Left colon (tissue), 2 donors: ENCODE measurements at regions of chr2 and their contacts with region 1.

Region 1: GRCh38 chr2:176821345-176821744 is 391.2 kb upstream of the HNRNPA3 start:
- DNase-seq: no peak
- ATAC-seq: no peak

Region 2: DNA sequence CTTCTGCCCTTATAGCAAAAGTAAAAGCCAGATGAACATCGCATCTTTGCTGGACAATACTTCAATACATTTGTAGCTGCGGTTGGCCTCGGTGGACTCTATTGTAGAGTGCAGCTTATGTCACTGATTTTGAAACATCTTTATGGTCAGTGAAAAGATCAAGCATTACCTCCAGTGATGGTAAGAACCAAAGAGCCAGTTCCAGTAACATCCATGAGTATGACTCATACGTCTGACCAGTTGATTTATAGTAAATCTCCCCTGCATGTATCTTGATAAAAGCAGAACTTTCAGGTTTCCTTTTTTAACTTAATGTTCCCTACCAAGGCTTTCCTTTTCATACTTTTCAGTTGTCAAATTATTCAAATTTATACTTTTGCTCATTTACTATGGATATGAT is 272.0 kb after region 1 on chr2:
- intact Hi-C with region 1: no loop called
- DNase-seq: no peak
- ATAC-seq: no peak

Region 3: DNA sequence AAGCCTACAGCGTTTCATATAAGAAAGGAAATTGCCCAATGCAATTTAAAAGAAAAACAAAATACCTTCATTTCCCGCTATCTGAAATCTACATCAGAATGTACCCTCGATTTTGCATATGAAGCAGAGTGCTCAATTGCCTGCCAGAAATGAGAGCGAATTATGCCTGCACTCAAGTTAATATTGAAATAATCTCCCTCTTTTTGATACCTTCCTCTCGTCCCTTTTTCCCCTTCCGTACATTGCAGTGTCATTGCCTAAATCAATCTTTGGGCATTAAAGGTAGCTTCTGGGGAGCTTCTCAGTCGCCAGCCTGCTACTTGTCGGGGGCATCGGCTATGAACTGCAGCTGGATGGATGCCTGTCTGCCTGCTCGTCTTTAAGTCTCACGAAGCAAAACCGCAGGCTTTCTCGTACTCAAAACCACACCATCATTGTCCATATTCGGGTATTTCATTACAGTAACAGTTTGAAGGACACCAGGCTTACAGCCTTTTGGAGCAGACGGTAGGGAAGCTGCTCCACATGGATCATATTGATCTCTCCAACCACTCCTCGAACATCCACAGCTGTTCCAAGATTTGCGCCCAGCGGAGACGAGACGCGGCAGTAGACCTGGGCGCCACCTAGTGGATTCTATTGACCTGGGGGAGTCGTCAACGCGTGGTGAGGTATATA is 327.3 kb after region 1 on chr2:
- intact Hi-C with region 1: loop called in 1 of 2 experiments (anchors 10 kb)
- DNase-seq: peak; percentile 75 to 85
- ATAC-seq: peak; percentile 96